Panc1 (cell line): ENCODE measurements at regions of chr2 and their contacts with region 1.

Region 1: GRCh38 chr2:43008388-43008787 is 216.0 kb upstream of the HAAO start:
- DNase-seq: no peak
- ATAC-seq: no peak
- H3K4me3 ChIP-seq: no peak overlapping the region
- H3K27ac ChIP-seq: no peak overlapping the region
- H3K4me1 ChIP-seq: no peaks in the 10 kb centered on the region
- H3K27me3 ChIP-seq: no peaks in the 10 kb centered on the region
- CTCF ChIP-seq: no peak

Region 2: DNA sequence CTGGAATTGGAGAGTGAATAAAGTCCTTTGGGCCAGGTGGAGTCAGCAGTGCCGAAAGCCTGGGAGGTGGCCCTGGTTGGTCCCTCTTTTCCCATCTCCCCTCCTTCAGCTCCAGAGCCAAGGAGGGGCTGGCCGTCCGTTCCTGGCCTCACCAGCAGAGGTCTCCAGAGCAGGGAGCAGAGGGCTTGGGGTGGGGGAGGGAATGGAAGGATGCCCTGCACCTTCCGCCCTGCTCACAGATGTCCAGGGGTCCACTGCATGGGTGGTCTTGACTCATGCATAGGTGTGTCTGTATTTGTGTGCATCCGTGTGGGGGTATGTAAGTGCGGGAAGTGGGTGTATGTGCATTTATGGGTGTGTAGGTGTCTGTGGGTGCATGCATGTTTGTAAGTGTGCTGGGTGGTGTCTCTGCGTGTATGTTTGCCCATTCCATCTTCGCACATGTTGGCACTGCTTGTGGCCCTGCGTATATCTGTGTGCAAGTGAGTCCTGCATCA is 16.2 kb after region 1 on chr2:
- CTCF ChIA-PET with region 1: no interaction called
- POLR2A ChIA-PET with region 1: no interaction called
- in situ Hi-C with region 1: no loop called
- intact Hi-C with region 1: no loop called
- DNase-seq: peak; percentile 20
- ATAC-seq: peak; percentile 90
- H3K4me3 ChIP-seq: no peak overlapping the region
- H3K27ac ChIP-seq: no peak overlapping the region; the same call in 1 of the 2 replicates
- H3K4me1 ChIP-seq: peaks cover 3% of the 10 kb centered on the region; the same call in 1 of the 2 replicates
- H3K27me3 ChIP-seq: no peaks in the 10 kb centered on the region
- CTCF ChIP-seq: peak; percentile 90

Region 3: GRCh38 chr2:43158259-43158880 is 150.0 kb after region 1 on chr2:
- CTCF ChIA-PET with region 1: no interaction called
- POLR2A ChIA-PET with region 1: interaction called, 10 read pairs
- in situ Hi-C with region 1: no loop called
- intact Hi-C with region 1: no loop called
- DNase-seq: no peak
- ATAC-seq: peak; percentile 80
- H3K4me3 ChIP-seq: peak overlapping the region in 1 of 2 experiments; percentile 5; a peak in 2 of 4 replicates
- H3K27ac ChIP-seq: peak overlapping the region; percentile 74
- H3K4me1 ChIP-seq: peaks cover 15% of the 10 kb centered on the region
- H3K27me3 ChIP-seq: no peaks in the 10 kb centered on the region
- CTCF ChIP-seq: no peak